GM12878 (cell line): ENCODE measurements at regions of chr9 and their contacts with region 1.

Region 1: DNA sequence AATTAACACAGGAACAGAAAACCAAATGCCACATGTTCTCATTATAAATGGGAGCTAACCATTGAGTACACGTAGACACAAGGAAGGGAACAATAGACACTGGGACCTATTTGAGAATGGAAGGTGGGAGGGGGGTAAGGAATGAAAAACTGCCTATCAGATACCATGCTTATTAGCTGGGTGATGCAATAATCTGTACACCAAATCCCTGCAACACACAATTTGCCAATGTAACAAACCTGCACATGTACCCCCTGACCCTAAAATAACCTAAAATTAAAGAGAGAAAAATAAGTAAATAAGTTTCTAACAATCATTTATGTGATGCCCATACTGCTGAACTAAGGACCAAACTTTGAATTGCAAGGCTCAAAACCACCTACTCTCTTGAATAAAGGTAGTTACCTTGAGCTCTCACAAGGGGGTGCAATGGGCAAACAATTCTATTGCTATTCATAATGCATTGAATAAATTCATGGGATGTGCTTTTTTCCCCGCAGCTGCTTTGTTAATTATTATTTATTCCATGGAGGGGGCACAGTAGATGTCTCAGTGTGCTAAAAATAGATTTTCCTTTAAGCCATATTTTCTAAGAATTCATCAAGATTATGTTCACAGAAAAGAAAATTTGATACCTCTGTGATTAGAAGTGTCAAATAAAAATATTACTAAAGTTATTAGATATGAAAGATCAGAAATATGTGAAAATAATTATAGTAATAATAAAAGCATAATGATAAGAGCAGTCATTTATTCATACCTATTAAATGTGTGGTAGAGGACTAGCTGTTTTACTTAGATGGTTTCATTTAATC is 76.2 kb upstream of the PTPN3 start:
- DNase-seq: peak; percentile 5
- ATAC-seq: peak; percentile 80
- H3K4me3 ChIP-seq: no peak overlapping the region
- H3K27ac ChIP-seq: no peak overlapping the region
- H3K4me1 ChIP-seq: no peaks in the 10 kb centered on the region
- H3K27me3 ChIP-seq: no peaks in the 10 kb centered on the region
- CTCF ChIP-seq: peak; percentile 58 to 67 (median 58); a peak in 5 of 6 replicates
- EP300 ChIP-seq: no peak
- POLR2A ChIP-seq: no peak
- RAD21 ChIP-seq: peak; percentile 85

Region 2: GRCh38 chr9:110217656-110218099 is 643.4 kb after region 1 on chr9:
- CTCF ChIA-PET with region 1: interaction called, 16 read pairs
- POLR2A ChIA-PET with region 1: no interaction called
- RAD21 ChIA-PET with region 1: interaction called, 6 read pairs
- SMC1A ChIA-PET with region 1: interaction called, 8 read pairs
- in situ Hi-C with region 1: loop called (anchors 10 kb)
- intact Hi-C with region 1: loop called (anchors 5 kb)
- DNase-seq: no peak
- ATAC-seq: peak; percentile 34
- H3K4me3 ChIP-seq: no peak overlapping the region
- H3K27ac ChIP-seq: no peak overlapping the region
- H3K4me1 ChIP-seq: no peaks in the 10 kb centered on the region
- H3K27me3 ChIP-seq: no peaks in the 10 kb centered on the region
- CTCF ChIP-seq: peak; percentile 61 to 72 (median 65)
- EP300 ChIP-seq: no peak
- POLR2A ChIP-seq: no peak
- RAD21 ChIP-seq: peak; percentile 69